Naive thymus-derived CD4-positive, alpha-beta T cell (primary cell): ENCODE measurements at regions of chr1 and their contacts with region 1.

Region 1: GRCh38 chr1:177181631-177182291 is 11.0 kb downstream of the BRINP2 start:
- DNase-seq: peak in 2 of 9 donors; percentile 0 to 45
- ATAC-seq: peak; percentile 34
- H3K4me3 ChIP-seq: no peak overlapping the region
- H3K4me3 Mint-ChIP-seq: peak overlapping the region; percentile 25 to 76 (median 58)
- H3K27ac ChIP-seq: no peak overlapping the region
- H3K27ac Mint-ChIP-seq: no peak overlapping the region
- H3K4me1 ChIP-seq: no peaks in the 10 kb centered on the region
- H3K4me1 Mint-ChIP-seq: peaks cover 7 to 16% (median 11%) of the 10 kb centered on the region in 7 donors
- H3K27me3 ChIP-seq: no peaks in the 10 kb centered on the region
- H3K27me3 Mint-ChIP-seq: peaks cover 25 to 49% (median 38%) of the 10 kb centered on the region in 5 donors

Region 2: GRCh38 chr1:176897350-176898236 is 284.2 kb before region 1 on chr1:
- CTCF ChIA-PET with region 1: no interaction called
- POLR2A ChIA-PET with region 1: no interaction called
- intact Hi-C with region 1: loop called in 1 of 2 experiments (anchors 5 kb)
- DNase-seq: peak in 3 of 9 donors; percentile 3 to 33 (median 5)
- ATAC-seq: no peak
- H3K4me3 ChIP-seq: no peak overlapping the region
- H3K4me3 Mint-ChIP-seq: peak overlapping the region in 3 of 10 donors; percentile 0 to 45 (median 34)
- H3K27ac ChIP-seq: no peak overlapping the region
- H3K27ac Mint-ChIP-seq: no peak overlapping the region
- H3K4me1 ChIP-seq: no peaks in the 10 kb centered on the region
- H3K4me1 Mint-ChIP-seq: peaks cover 4 to 8% (median 5%) of the 10 kb centered on the region in 7 donors
- H3K27me3 ChIP-seq: peaks cover 0 to 4% of the 10 kb centered on the region in 2 donors
- H3K27me3 Mint-ChIP-seq: peaks cover 4 to 18% (median 16%) of the 10 kb centered on the region in 5 donors